Adrenal gland (tissue), 19 donors: ENCODE measurements at regions of chr14 and their contacts with region 1.

Region 1: GRCh38 chr14:69460093-69460701 is 24.3 kb upstream of the PLEKHD1 start:
- DNase-seq: peak; percentile 66 to 93 (median 79)
- H3K4me3 ChIP-seq: no peak overlapping the region
- H3K27ac ChIP-seq: no peak overlapping the region
- H3K4me1 ChIP-seq: peaks cover 0 to 3% of the 10 kb centered on the region in 2 donors
- H3K27me3 ChIP-seq: no peaks in the 10 kb centered on the region
- CTCF ChIP-seq: peak; percentile 58 to 96 (median 93)
- POLR2A ChIP-seq: no peak

Region 2: GRCh38 chr14:69398053-69398817 is 62.0 kb before region 1 on chr14 and contains the starts of genes ERH and SLC39A9:
- intact Hi-C with region 1: loop called in 1 of 2 experiments (anchors 5 kb)
- DNase-seq: peak; percentile 95 to 99 (median 97)
- H3K4me3 ChIP-seq: peak within 1 kb of the TSS; percentile 80 to 90 (median 85)
- H3K27ac ChIP-seq: peak within 1 kb of the TSS; percentile 85 to 98 (median 90)
- H3K4me1 ChIP-seq: peaks cover 30 to 55% of the 10 kb centered on the region in 2 donors
- H3K27me3 ChIP-seq: no peaks in the 10 kb centered on the region
- CTCF ChIP-seq: peak in 1 of 6 experiments; percentile 1
- POLR2A ChIP-seq: peak; percentile 55 to 71
- total RNA-seq, gene ERH: 39.6 to 217 (median 127) TPM
- total RNA-seq, gene SLC39A9: 67.2 to 130 (median 74.2) TPM